Stomach (tissue), 19 donors: ENCODE measurements at regions of chr3 and their contacts with region 1.

Region 1: DNA sequence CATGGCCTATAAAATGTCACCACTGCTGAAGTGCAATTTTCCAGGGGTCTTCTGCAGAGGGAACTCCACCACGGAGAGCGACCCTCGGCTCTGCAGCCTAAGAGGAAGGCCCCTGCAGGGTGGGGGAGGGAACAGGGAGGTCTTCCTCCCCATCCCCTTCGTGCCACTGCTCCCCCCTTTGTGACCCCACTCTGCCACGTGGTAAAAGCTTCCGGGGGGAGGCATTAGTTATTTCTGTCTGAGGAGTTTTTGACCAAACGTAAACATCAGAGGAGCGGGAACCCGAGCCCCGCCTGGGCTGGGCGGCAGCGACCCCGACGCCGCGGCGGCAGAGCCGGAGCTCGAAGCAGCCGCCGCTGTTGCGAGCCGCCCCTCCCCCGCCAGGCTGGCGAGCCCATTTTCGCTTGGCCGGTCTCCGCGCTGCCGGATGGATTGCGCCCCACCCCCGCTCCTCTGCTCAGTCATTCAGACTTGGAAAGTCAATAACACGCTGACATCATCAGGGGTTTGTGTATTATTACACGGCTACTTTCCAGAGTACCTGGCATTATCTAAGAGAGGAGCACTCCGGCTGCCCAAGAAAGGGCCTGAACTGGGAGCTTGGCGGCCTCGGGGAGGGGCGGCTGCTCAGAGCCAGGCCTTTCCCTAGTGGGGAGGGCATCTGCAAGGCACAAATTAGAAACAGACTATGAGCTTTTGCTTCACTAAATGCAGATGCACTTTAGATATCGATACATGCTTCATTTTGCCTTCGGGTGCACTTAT is 162.5 kb upstream of the TBL1XR1 start:
- DNase-seq: peak; percentile 96 to 98
- H3K4me3 ChIP-seq: peak overlapping the region; percentile 27 to 41 (median 38)
- H3K27ac ChIP-seq: peak overlapping the region; percentile 81 to 92 (median 90)
- H3K4me1 ChIP-seq: peaks cover 47 to 73% (median 55%) of the 10 kb centered on the region in 4 donors
- H3K27me3 ChIP-seq: no peaks in the 10 kb centered on the region
- CTCF ChIP-seq: no peak
- EP300 ChIP-seq: peak; percentile 96
- POLR2A ChIP-seq: peak in 1 of 4 donors; percentile 32

Region 2: DNA sequence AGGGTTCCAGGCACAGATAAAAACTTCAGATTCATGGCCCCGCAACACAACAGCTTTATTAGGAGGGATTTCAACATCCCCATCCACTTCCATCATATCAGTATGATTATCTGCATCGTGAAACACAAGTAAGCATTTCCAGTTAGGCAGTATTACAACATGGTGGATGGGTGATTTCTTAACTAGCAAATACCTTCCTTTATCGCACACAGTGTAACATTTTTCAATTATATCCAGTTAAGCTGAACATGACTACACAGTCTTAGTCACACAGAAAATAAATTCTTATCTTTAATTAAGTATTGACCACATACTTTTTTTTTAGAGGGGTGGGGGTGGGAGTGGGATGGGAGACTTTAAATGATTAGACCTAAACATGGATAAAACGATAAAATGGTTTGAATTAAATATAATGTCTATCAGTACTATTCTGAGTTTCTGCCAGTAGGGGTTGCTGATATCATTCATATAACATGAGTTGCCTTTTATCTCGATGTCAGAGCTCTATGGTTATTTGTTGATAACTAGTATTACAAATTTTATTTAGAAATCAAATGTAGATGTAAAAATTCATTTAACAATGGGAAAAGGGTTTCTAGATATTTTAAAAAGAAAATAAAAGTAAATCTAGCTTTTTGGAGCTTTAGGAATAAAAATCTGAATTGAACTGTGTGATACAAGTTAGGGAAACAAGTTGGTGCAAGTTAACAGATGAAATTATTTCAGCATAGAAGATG is 309.1 kb before region 1 on chr3:
- intact Hi-C with region 1: loop called (anchors 10 kb)
- DNase-seq: peak in 1 of 2 donors; percentile 79
- H3K4me3 ChIP-seq: no peak overlapping the region
- H3K27ac ChIP-seq: no peak overlapping the region
- H3K4me1 ChIP-seq: peaks cover 0 to 46% (median 20%) of the 10 kb centered on the region in 4 donors
- H3K27me3 ChIP-seq: no peaks in the 10 kb centered on the region
- CTCF ChIP-seq: peak in 5 of 7 experiments; percentile 31 to 67 (median 48)
- EP300 ChIP-seq: no peak
- POLR2A ChIP-seq: no peak

Region 3: GRCh38 chr3:177201706-177202397 is 157.9 kb before region 1 on chr3:
- intact Hi-C with region 1: loop called (anchors 5 kb)
- DNase-seq: peak in 1 of 2 donors; percentile 62
- H3K4me3 ChIP-seq: no peak overlapping the region
- H3K27ac ChIP-seq: peak overlapping the region in 2 of 5 donors; percentile 4 to 67
- H3K4me1 ChIP-seq: peaks cover 0 to 26% (median 16%) of the 10 kb centered on the region in 4 donors
- H3K27me3 ChIP-seq: no peaks in the 10 kb centered on the region
- CTCF ChIP-seq: no peak
- EP300 ChIP-seq: no peak
- POLR2A ChIP-seq: no peak